Mammary epithelial cell (primary cell): ENCODE measurements at regions of chr18 and their contacts with region 1.

Region 1: GRCh38 chr18:35306588-35307250 is 16.7 kb upstream of the ZSCAN30 start:
- DNase-seq: no peak
- H3K4me3 ChIP-seq: no peak overlapping the region
- H3K27ac ChIP-seq: no peak overlapping the region
- H3K4me1 ChIP-seq: no peaks in the 10 kb centered on the region
- H3K27me3 ChIP-seq: no peaks in the 10 kb centered on the region
- CTCF ChIP-seq: no peak

Region 2: DNA sequence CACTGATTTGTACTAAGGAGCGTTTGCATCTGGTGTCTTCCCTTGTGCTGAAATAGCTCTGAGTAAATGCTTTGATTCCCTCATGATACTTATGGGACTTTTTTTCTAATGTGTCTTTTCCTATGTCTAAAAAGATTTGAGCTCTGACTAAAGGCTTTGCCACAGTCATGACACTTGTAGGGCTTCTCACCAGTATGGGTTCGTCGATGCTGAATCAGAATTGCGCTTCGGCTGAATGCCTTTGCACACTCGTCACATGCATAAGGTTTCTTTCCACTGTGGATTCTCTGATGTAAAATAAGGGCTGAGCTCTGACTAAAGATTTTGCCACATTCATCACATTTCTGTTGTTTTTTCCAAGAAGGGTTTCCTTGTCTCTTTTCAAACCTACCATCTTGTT is 62.4 kb after region 1 on chr18:
- CTCF ChIA-PET with region 1: no interaction called
- dilution Hi-C with region 1: no loop called
- in situ Hi-C with region 1: loop called in 1 of 2 experiments (anchors 10 kb)
- intact Hi-C with region 1: no loop called
- DNase-seq: no peak
- H3K4me3 ChIP-seq: no peak overlapping the region
- H3K27ac ChIP-seq: no peak overlapping the region
- H3K4me1 ChIP-seq: no peaks in the 10 kb centered on the region
- H3K27me3 ChIP-seq: peaks cover 16% of the 10 kb centered on the region
- CTCF ChIP-seq: no peak

Region 3: DNA sequence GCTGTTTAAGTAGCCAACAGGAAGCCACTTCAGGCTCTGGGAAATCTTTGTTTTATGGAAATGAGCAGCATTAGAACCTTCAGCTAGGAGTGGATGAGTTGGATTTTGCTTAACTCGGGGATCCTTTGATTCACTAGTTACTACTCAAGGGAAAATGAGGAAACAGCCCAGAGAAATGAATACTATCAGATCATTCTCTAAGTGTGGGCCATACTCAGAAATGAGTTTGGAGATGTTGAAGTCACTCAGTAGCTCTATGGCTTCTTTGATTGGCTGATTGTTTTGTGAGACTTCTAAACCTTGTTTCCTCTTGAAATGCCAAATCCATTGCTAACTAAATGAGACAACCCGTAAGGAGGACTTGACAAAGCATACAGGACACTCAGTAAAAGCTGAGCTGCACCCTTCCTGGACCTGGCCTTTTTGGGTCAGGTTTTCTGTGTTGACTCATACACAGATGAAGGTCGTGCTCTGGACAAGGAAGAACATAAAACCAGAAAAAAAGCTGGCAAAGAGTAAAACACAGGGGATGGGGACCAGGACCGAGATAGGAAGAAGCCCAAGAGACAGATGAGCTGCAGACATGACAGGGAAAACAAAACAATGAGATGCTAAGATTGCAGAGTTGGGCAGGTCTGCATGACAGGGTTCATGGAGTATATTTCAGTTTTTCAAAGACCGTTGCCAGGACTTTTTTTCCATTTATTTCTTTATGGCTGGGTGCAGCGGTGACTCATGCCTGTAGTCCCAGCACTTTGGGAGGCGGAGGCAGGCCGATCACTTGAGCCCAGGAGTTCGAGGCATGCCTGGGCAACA is 149.4 kb after region 1 on chr18:
- CTCF ChIA-PET with region 1: no interaction called
- dilution Hi-C with region 1: no loop called
- in situ Hi-C with region 1: no loop called
- intact Hi-C with region 1: no loop called
- DNase-seq: peak; percentile 83
- H3K4me3 ChIP-seq: no peak overlapping the region
- H3K27ac ChIP-seq: peak overlapping the region; percentile 76
- H3K4me1 ChIP-seq: peaks cover 59% of the 10 kb centered on the region
- H3K27me3 ChIP-seq: no peaks in the 10 kb centered on the region
- CTCF ChIP-seq: no peak